ENCODE measurements at regions of chr11 and their contacts with region 1.

Region 1: GRCh38 chr11:45804761-45805304 is at the start of gene SLC35C1:
- DNase-seq: peak; percentile 95
- ATAC-seq: peak; percentile 96
- H3K4me3 Mint-ChIP-seq: peak within 1 kb of the TSS; percentile 92
- H3K27ac Mint-ChIP-seq: peak within 1 kb of the TSS; percentile 78
- H3K4me1 Mint-ChIP-seq: peaks cover 41% of the 10 kb centered on the region
- H3K27me3 Mint-ChIP-seq: no peaks in the 10 kb centered on the region
- CTCF ChIP-seq: no peak
- total RNA-seq, gene SLC35C1: 8.6 and 8.8 TPM in 2 replicates

Region 2: GRCh38 chr11:44950625-44951476 is 854.0 kb before region 1 on chr11 and contains the start of gene TP53I11:
- CTCF ChIA-PET with region 1: no interaction called
- POLR2A ChIA-PET with region 1: no interaction called
- intact Hi-C with region 1: loop called (anchors 10 kb)
- DNase-seq: peak; percentile 74
- ATAC-seq: peak; percentile 76
- H3K4me3 Mint-ChIP-seq: peak within 1 kb of the TSS; percentile 91
- H3K27ac Mint-ChIP-seq: peak within 1 kb of the TSS; percentile 87
- H3K4me1 Mint-ChIP-seq: peaks cover 60% of the 10 kb centered on the region
- H3K27me3 Mint-ChIP-seq: no peaks in the 10 kb centered on the region
- CTCF ChIP-seq: peak; percentile 44
- total RNA-seq, gene TP53I11: 145 and 175 TPM in 2 replicates

Region 3: DNA sequence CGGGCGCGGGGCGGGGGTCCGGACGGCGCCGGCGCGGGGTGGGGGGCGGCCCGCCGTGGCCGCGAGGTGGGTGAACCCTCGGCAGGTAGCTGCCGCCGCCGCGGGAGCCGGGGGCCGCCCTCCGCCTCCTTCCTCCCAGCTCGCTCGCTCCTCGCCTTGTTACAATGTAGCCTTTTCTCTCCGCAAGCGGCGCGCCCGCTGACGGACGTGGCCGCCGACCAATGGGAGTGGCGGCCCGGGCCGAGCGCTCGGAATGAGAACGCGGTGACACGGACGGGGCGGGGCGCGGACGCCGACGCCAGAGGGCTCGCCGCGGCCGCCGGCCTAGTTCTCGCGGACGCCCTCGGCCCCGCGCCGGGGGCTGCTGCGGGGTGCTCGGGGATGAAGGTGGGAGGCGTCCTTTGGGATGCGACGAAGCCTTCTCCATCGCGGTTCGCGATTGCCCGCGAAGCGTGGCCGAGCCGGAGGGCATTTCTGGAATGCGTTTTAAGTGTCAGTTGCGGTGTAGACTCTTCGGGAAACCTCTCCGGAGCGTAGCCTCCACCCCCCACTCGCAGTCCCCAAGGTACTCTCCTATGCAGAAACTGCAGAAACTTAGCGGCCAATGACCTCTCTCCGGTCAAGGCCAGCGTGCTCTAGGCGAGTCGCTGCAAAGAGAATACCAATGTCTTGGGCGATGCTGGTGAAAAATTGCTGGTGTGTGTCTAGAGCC is 657.7 kb before region 1 on chr11:
- CTCF ChIA-PET with region 1: no interaction called
- POLR2A ChIA-PET with region 1: no interaction called
- intact Hi-C with region 1: loop called (anchors 10 kb)
- DNase-seq: peak; percentile 92
- ATAC-seq: peak; percentile 98
- H3K4me3 Mint-ChIP-seq: peak overlapping the region; percentile 87
- H3K27ac Mint-ChIP-seq: peak overlapping the region; percentile 77
- H3K4me1 Mint-ChIP-seq: peaks cover 33% of the 10 kb centered on the region
- H3K27me3 Mint-ChIP-seq: peaks cover 7% of the 10 kb centered on the region
- CTCF ChIP-seq: no peak

Region 4: DNA sequence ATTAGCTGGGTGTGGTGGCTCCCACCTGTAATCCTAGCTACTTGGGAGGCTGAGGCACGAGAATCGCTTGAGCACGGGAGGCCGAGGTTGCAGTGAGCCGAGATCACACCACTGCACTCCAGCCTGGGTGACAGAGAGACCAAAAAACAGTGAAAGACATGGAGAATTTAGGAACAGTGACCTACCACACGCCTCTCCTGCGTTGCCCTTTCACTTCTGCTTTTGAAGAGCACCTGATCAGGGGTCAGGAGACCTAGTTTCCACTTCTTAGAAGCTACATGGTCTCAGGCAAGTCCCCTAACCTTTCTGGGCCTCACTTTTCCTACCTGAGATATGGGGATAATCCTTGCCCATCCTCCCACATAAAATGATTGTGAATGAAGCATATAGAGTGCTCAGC is 12.4 kb after region 1 on chr11:
- CTCF ChIA-PET with region 1: no interaction called
- POLR2A ChIA-PET with region 1: interaction called, 5 read pairs
- intact Hi-C with region 1: loop called (anchors 1 kb)
- DNase-seq: no peak
- ATAC-seq: peak; percentile 72
- H3K4me3 Mint-ChIP-seq: peak overlapping the region; percentile 53
- H3K27ac Mint-ChIP-seq: peak overlapping the region; percentile 67
- H3K4me1 Mint-ChIP-seq: peaks cover 34% of the 10 kb centered on the region
- H3K27me3 Mint-ChIP-seq: no peaks in the 10 kb centered on the region
- CTCF ChIP-seq: no peak

Region 5: GRCh38 chr11:45917623-45918330 is 112.9 kb after region 1 on chr11 and contains the start of gene PEX16:
- CTCF ChIA-PET with region 1: no interaction called
- POLR2A ChIA-PET with region 1: interaction called, 4 read pairs
- intact Hi-C with region 1: loop called (anchors 5 kb)
- DNase-seq: peak; percentile 87
- ATAC-seq: peak; percentile 85
- H3K4me3 Mint-ChIP-seq: peak within 1 kb of the TSS; percentile 94
- H3K27ac Mint-ChIP-seq: peak within 1 kb of the TSS; percentile 97
- H3K4me1 Mint-ChIP-seq: peaks cover 61% of the 10 kb centered on the region
- H3K27me3 Mint-ChIP-seq: no peaks in the 10 kb centered on the region
- CTCF ChIP-seq: no peak
- total RNA-seq, gene PEX16: 72.0 and 77.7 TPM in 2 replicates